Activated CD4-positive, alpha-beta T cell treated with anti-CD3 and anti-CD28 coated beads, Interleukin-2, amount 10 ng/mL, durations not matched to agents 24 days and 14 days (primary cell): ENCODE measurements at regions of chrX and their contacts with region 1.

Region 1: GRCh38 chrX:154397819-154398724 is at the start of gene RPL10:
- DNase-seq: peak; percentile 97
- H3K4me3 Mint-ChIP-seq: peak within 1 kb of the TSS; percentile 92
- H3K27ac Mint-ChIP-seq: peak within 1 kb of the TSS; percentile 100
- H3K4me1 Mint-ChIP-seq: peaks cover 11% of the 10 kb centered on the region
- H3K27me3 Mint-ChIP-seq: no peaks in the 10 kb centered on the region
- total RNA-seq, gene RPL10: 2,338 and 2,364 TPM in 2 replicates

Region 2: DNA sequence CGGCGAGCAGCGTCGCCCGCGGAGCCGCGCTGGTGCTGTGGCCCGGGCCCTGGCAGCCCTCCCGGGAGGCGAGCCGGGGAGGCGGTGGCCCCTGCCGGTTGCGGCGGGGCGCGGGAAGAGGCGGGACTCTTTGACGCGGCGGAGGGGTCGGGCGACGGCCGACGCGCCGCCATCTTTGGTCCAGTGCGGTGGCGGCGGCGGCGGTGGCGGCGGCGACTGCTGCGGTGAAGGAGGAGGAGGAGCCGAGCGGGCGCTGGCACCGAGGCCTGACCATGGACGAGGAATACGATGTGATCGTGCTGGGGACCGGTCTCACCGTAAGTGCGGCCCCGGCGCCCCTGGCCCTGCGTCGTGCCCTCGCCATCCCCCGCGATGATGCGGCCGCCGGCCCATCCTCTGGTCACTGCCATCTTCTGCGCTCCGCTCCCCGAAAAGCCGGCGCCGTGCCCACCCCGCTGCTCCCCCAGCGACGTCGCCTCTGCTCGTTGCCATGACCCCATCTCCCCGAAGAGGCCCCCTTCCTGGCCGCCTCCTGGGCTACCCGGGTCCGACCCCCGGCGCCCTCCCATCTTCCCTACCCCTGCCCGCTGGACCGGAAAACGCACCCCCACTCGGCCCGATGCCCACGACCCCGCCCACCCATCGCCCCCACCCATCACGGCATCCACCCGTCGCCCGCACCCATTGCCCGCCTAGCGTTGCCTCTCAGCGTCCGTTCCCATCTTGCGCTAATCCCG is 39.1 kb after region 1 on chrX and contains the start of gene GDI1:
- intact Hi-C with region 1: loop called (anchors 5 kb)
- DNase-seq: peak; percentile 89
- H3K4me3 Mint-ChIP-seq: peak within 1 kb of the TSS; percentile 89
- H3K27ac Mint-ChIP-seq: peak within 1 kb of the TSS; percentile 92
- H3K4me1 Mint-ChIP-seq: peaks cover 15% of the 10 kb centered on the region
- H3K27me3 Mint-ChIP-seq: no peaks in the 10 kb centered on the region
- total RNA-seq, gene GDI1: 118 and 120 TPM in 2 replicates